ENCODE measurements at regions of chr15 and their contacts with region 1.

Region 1: DNA sequence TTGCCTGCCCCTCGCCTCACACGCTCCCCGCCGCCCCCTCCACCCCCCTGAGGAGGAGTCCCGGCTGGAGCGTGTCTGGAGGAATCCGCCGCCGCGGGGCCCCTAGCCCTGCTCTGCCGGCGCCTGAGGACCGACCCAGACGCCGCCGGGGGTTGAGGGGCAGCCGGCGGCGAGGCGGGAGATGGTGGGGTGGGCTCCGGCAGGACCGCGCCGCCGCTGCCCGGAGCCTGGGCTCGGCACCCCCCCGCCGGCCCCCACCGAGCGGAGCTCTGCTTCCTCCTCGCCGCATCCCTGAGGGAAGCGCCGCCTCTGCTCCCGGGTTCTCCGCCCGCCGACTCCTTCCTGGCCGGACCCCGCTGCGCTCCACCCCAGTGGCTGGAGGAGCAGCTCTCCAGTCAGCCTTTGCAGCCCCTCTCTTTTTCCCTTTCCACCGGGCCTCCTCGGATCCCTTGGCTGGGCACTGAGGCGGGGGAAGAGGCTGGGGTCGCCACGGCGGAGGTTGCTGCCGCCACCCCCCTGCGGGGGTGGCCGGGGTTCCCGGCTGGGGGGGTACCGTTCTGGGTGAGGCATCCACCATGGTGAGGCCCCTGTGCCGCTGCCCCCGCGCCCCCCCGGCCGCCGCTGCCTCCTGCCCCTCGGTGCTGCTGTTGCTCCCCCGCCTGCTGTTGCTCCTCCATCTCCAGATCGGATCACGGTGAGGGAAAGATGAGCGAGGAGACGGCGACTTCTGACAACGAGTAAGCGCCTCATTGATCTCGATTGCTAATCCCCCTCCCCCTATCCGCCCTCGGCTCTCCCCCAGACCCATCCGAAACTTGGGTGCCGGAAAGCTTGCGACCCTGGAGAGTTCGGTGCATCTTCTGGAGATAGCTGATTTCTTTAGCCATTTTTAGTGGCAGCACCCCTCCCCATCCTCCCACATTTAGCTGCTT is at the start of gene SPRED1:
- DNase-seq: no peak
- ATAC-seq: peak; percentile 11
- H3K4me3 Mint-ChIP-seq: peak within 1 kb of the TSS; percentile 94
- H3K27ac Mint-ChIP-seq: peak within 1 kb of the TSS; percentile 84
- H3K4me1 Mint-ChIP-seq: peaks cover 32% of the 10 kb centered on the region
- H3K27me3 Mint-ChIP-seq: peaks cover 1% of the 10 kb centered on the region
- CTCF ChIP-seq: no peak
- total RNA-seq, gene SPRED1: 1.3 and 1.4 TPM in 2 replicates

Region 2: GRCh38 chr15:36579792-36580431 is 1672.8 kb before region 1 on chr15:
- CTCF ChIA-PET with region 1: no interaction called
- POLR2A ChIA-PET with region 1: no interaction called
- intact Hi-C with region 1: loop called (anchors 2 kb)
- DNase-seq: no peak
- ATAC-seq: peak; percentile 19
- H3K4me3 Mint-ChIP-seq: peak overlapping the region; percentile 93
- H3K27ac Mint-ChIP-seq: peak overlapping the region; percentile 96
- H3K4me1 Mint-ChIP-seq: peaks cover 22% of the 10 kb centered on the region
- H3K27me3 Mint-ChIP-seq: peaks cover 2% of the 10 kb centered on the region
- CTCF ChIP-seq: no peak

Region 3: GRCh38 chr15:37995461-37996347 is 257.0 kb before region 1 on chr15:
- CTCF ChIA-PET with region 1: no interaction called
- POLR2A ChIA-PET with region 1: no interaction called
- intact Hi-C with region 1: loop called (anchors 5 kb)
- DNase-seq: no peak
- ATAC-seq: peak; percentile 47
- H3K4me3 Mint-ChIP-seq: no peak overlapping the region
- H3K27ac Mint-ChIP-seq: no peak overlapping the region
- H3K4me1 Mint-ChIP-seq: no peaks in the 10 kb centered on the region
- H3K27me3 Mint-ChIP-seq: peaks cover 16% of the 10 kb centered on the region
- CTCF ChIP-seq: no peak

Region 4: GRCh38 chr15:38084289-38084688 is 168.5 kb before region 1 on chr15:
- CTCF ChIA-PET with region 1: no interaction called
- POLR2A ChIA-PET with region 1: interaction called, 10 read pairs
- intact Hi-C with region 1: loop called (anchors 2 kb)
- DNase-seq: no peak
- ATAC-seq: peak; percentile 41
- H3K4me3 Mint-ChIP-seq: no peak overlapping the region
- H3K27ac Mint-ChIP-seq: peak overlapping the region; percentile 12
- H3K4me1 Mint-ChIP-seq: peaks cover 27% of the 10 kb centered on the region
- H3K27me3 Mint-ChIP-seq: peaks cover 4% of the 10 kb centered on the region
- CTCF ChIP-seq: no peak

Region 5: DNA sequence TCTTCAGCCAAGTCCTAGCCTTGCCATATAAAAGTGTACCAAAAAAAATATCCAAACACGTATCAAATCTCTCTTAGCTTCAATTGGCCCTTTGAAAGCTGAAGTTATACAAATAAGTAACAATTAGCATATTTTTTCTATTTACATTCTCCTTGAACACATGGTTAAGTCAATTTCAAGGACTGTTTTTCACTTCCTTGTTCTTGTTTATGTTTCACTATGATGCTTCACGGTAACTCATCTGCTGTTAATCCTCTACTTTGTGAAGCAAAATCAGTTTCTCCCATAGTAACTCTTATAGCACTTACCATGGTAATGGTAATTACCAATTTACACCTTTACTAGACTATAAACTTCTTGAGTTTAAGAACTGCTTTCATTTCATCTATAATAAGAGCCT is 10.7 kb before region 1 on chr15:
- CTCF ChIA-PET with region 1: no interaction called
- POLR2A ChIA-PET with region 1: no interaction called
- intact Hi-C with region 1: loop called (anchors 1 kb)
- DNase-seq: no peak
- ATAC-seq: peak; percentile 50
- H3K4me3 Mint-ChIP-seq: no peak overlapping the region
- H3K27ac Mint-ChIP-seq: no peak overlapping the region
- H3K4me1 Mint-ChIP-seq: peaks cover 11% of the 10 kb centered on the region
- H3K27me3 Mint-ChIP-seq: peaks cover 12% of the 10 kb centered on the region
- CTCF ChIP-seq: no peak

Region 6: GRCh38 chr15:38354315-38354929 is 101.7 kb after region 1 on chr15:
- CTCF ChIA-PET with region 1: interaction called, 3 read pairs
- POLR2A ChIA-PET with region 1: no interaction called
- intact Hi-C with region 1: loop called (anchors 1 kb)
- DNase-seq: peak; percentile 16
- ATAC-seq: peak; percentile 65
- H3K4me3 Mint-ChIP-seq: no peak overlapping the region
- H3K27ac Mint-ChIP-seq: no peak overlapping the region
- H3K4me1 Mint-ChIP-seq: no peaks in the 10 kb centered on the region
- H3K27me3 Mint-ChIP-seq: no peaks in the 10 kb centered on the region
- CTCF ChIP-seq: no peak

Region 7: GRCh38 chr15:38671675-38672254 is 419.0 kb after region 1 on chr15:
- CTCF ChIA-PET with region 1: no interaction called
- POLR2A ChIA-PET with region 1: no interaction called
- intact Hi-C with region 1: loop called (anchors 5 kb)
- DNase-seq: peak; percentile 22
- ATAC-seq: peak; percentile 66
- H3K4me3 Mint-ChIP-seq: peak overlapping the region; percentile 65
- H3K27ac Mint-ChIP-seq: peak overlapping the region; percentile 94
- H3K4me1 Mint-ChIP-seq: peaks cover 78% of the 10 kb centered on the region
- H3K27me3 Mint-ChIP-seq: no peaks in the 10 kb centered on the region
- CTCF ChIP-seq: no peak

Measured in activated B cell treated with CpG ODN at 0.5 μM for 24 hours (primary cell).